ENCODE measurements at regions of chr6 and their contacts with region 1.

Region 1: DNA sequence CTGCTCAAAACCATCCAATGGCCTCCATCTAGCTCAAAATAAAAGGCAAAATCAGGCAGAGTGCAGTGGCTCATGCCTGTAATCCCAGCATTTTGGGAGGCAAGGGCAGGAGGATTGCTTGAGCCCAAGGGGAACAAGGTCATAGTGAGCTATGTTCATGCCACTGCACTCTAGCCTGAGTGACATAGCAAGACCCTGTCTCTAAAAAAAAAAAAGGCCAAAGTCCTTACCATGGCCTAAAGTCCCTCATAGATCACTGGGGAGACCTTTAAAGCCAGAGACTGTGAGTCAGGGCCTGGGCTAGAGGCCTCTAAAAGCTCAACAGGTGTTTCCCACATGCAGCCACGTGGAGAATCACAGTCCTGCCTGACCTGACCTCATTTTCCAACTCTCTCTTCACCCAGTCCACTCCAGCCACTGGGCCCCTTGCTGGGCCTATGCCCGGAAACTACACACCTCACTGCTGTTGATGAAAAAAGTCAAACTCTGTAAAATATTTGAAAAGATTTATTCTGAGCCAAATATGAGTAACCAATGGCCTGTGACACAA is 28.2 kb upstream of the TAB2 start:
- DNase-seq: no peak
- ATAC-seq: no peak
- H3K4me3 ChIP-seq: no peak overlapping the region
- H3K4me3 Mint-ChIP-seq: no peak overlapping the region
- H3K27ac ChIP-seq: no peak overlapping the region
- H3K27ac Mint-ChIP-seq: no peak overlapping the region
- H3K4me1 ChIP-seq: no peaks in the 10 kb centered on the region
- H3K4me1 Mint-ChIP-seq: no peaks in the 10 kb centered on the region
- H3K27me3 ChIP-seq: no peaks in the 10 kb centered on the region
- H3K27me3 Mint-ChIP-seq: no peaks in the 10 kb centered on the region
- CTCF ChIP-seq: no peak

Region 2: DNA sequence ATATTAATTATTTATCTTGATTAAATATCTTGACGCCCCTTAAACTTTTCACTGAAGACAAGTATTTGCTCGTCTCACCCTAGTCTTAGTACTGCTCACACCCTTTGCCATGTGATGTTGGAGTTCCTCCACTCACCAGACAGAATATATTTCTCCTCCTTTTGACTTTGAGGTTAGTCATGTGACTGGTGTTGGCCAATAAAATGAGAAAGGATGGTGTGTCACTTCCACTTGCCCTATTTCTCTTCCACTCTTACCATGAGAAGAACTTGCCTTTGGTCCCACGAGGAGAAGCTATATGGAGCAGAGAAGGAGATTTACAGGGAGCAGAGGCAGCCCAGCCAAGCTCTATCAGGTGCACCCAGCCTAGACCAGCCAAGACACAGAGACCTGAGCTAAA is 36.6 kb before region 1 on chr6:
- CTCF ChIA-PET with region 1: no interaction called
- POLR2A ChIA-PET with region 1: no interaction called
- intact Hi-C with region 1: loop called in 1 of 2 experiments (anchors 2 kb)
- DNase-seq: no peak
- ATAC-seq: no peak
- H3K4me3 ChIP-seq: no peak overlapping the region
- H3K4me3 Mint-ChIP-seq: no peak overlapping the region
- H3K27ac ChIP-seq: no peak overlapping the region
- H3K27ac Mint-ChIP-seq: no peak overlapping the region
- H3K4me1 ChIP-seq: peaks cover 13% of the 10 kb centered on the region
- H3K4me1 Mint-ChIP-seq: peaks cover 19% of the 10 kb centered on the region
- H3K27me3 ChIP-seq: no peaks in the 10 kb centered on the region
- H3K27me3 Mint-ChIP-seq: no peaks in the 10 kb centered on the region
- CTCF ChIP-seq: no peak

Region 3: DNA sequence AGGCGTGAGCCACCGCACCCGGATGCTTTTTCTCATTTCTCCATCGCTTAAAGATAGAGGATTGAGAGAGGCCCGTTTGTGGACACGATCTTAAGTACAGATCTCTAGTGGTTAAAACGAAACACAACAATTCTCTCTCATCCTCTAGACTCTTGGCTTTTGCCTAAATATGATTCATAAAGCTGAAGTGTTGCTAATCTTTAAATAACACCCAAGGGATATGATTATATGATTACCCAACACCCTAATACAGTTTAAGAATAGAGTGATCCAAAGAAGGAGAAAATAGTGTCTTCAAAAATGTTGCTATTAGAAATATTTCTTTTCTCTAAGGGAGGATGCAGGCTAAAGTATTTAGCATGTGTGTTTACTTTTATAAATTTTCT is 1626.6 kb after region 1 on chr6:
- CTCF ChIA-PET with region 1: no interaction called
- POLR2A ChIA-PET with region 1: no interaction called
- intact Hi-C with region 1: no loop called
- DNase-seq: no peak
- ATAC-seq: no peak
- H3K4me3 ChIP-seq: no peak overlapping the region
- H3K4me3 Mint-ChIP-seq: no peak overlapping the region
- H3K27ac ChIP-seq: no peak overlapping the region
- H3K27ac Mint-ChIP-seq: no peak overlapping the region
- H3K4me1 ChIP-seq: no peaks in the 10 kb centered on the region
- H3K4me1 Mint-ChIP-seq: no peaks in the 10 kb centered on the region
- H3K27me3 ChIP-seq: no peaks in the 10 kb centered on the region
- H3K27me3 Mint-ChIP-seq: no peaks in the 10 kb centered on the region
- CTCF ChIP-seq: no peak

Region 4: DNA sequence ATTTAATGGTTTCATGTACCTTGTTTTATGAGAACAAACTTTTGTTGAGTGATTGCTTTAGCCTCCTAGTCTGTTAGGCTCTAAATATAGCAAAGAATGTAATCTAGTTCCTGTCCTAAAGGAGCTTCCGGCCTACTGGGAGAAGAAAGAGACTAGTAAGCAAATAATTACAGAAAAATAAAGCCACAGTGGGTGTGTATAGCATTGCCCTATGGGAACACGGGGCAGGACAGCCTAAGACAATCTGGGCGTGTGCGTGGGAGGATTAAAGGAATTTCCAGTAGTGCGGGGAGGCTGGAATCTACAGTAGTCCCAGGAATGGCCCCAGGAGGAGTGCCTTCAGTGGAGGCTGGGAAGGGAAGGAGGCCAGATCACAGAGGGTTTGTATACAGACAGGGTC is 1852.4 kb after region 1 on chr6:
- CTCF ChIA-PET with region 1: no interaction called
- POLR2A ChIA-PET with region 1: no interaction called
- intact Hi-C with region 1: no loop called
- DNase-seq: no peak
- ATAC-seq: no peak
- H3K4me3 ChIP-seq: no peak overlapping the region
- H3K4me3 Mint-ChIP-seq: no peak overlapping the region
- H3K27ac ChIP-seq: no peak overlapping the region
- H3K27ac Mint-ChIP-seq: no peak overlapping the region
- H3K4me1 ChIP-seq: no peaks in the 10 kb centered on the region
- H3K4me1 Mint-ChIP-seq: no peaks in the 10 kb centered on the region
- H3K27me3 ChIP-seq: no peaks in the 10 kb centered on the region
- H3K27me3 Mint-ChIP-seq: no peaks in the 10 kb centered on the region
- CTCF ChIP-seq: no peak